ENCODE measurements at regions of chr3 and their contacts with region 1.

Region 1: DNA sequence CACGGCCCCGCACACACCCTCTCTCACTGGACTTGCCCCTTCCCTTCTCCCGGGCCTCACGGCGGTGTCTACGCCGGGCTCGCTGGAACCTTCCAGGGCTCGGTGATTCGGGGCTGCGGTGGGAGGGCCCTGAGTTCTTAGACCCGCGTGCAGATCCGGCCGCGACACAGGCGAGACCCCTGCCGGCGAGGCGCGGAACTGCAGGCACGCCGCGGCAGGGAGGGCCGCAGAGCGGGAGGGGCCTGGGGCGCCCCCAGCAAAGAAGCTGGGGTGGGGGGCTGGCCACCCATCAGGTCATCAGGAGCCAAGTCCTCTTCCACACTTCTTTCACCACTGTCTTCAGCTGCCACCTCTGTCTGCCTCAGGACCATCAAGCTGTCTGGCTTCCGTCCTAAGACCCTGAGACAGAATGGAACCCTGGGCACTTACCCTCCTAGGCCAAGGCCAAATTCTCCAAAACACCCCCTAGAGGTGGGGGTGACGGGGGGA is 164.5 kb downstream of the XXYLT1 start:
- DNase-seq: peak; percentile 73 to 88 (median 75)
- ATAC-seq: peak in 3 of 4 donors; percentile 70 to 79 (median 77)
- H3K4me3 ChIP-seq: peak overlapping the region in 6 of 12 donors; percentile 20 to 42 (median 27)
- H3K27ac ChIP-seq: peak overlapping the region in 1 of 12 donors; percentile 30
- H3K4me1 ChIP-seq: peaks cover 2 to 45% (median 18%) of the 10 kb centered on the region in 12 donors
- H3K27me3 ChIP-seq: no peaks in the 10 kb centered on the region
- CTCF ChIP-seq: peak; percentile 99 to 100 (median 100)
- POLR2A ChIP-seq: no peak

Region 2: GRCh38 chr3:194671900-194672808 is 434.3 kb before region 1 on chr3 and contains the start of gene LSG1:
- intact Hi-C with region 1: loop called in 1 of 10 experiments (anchors 1 kb)
- DNase-seq: peak; percentile 92 to 95 (median 94)
- ATAC-seq: peak; percentile 92 to 97 (median 95)
- H3K4me3 ChIP-seq: peak within 1 kb of the TSS; percentile 67 to 93 (median 82)
- H3K27ac ChIP-seq: peak within 1 kb of the TSS; percentile 90 to 98 (median 94)
- H3K4me1 ChIP-seq: peaks cover 0 to 36% (median 17%) of the 10 kb centered on the region in 12 donors
- H3K27me3 ChIP-seq: no peaks in the 10 kb centered on the region
- CTCF ChIP-seq: peak in 1 of 12 donors; percentile 5
- POLR2A ChIP-seq: peak in 1 of 2 donors; percentile 39
- total RNA-seq, gene LSG1: 13.7 to 22.2 (median 18.9) TPM

Region 3: DNA sequence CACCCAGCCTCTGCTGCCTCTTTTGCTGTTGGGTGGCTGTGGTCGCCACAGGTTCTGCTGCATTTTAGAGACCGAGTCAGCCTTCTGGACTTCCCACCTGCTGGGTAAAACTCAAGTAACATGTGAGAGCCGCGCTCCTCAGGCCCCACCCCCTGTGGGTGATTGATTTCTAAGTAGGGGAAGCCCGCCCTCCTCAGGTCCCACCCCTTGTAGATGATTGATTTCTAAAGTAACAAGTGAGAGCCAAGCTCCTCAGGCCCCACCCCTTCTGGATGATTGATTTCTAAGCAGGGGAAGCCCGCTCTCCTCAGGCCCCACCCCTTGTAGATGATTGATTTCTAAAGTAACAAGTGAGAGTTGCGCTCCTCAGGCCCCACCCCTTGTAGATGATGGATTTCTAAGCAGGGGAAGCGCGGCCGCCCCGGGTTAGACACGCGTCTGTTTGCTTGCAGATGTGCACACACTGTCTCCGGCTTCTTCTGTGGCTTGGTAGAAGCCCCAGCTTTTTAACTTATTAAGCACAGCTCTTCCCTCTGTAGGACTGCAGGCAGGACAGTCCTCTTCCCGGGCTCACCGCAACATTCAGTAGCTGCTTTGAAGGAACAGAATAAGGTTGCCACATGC is 337.3 kb before region 1 on chr3:
- intact Hi-C with region 1: loop called in 1 of 10 experiments (anchors 5 kb)
- DNase-seq: peak; percentile 91 to 97 (median 92)
- ATAC-seq: peak; percentile 98 to 99 (median 99)
- H3K4me3 ChIP-seq: peak overlapping the region in 10 of 12 donors; percentile 26 to 60 (median 45)
- H3K27ac ChIP-seq: peak overlapping the region in 10 of 12 donors; percentile 6 to 66 (median 49)
- H3K4me1 ChIP-seq: peaks cover 0 to 45% (median 18%) of the 10 kb centered on the region in 12 donors
- H3K27me3 ChIP-seq: no peaks in the 10 kb centered on the region
- CTCF ChIP-seq: peak in 1 of 12 donors; percentile 4
- POLR2A ChIP-seq: no peak

Region 4: GRCh38 chr3:194782698-194783404 is 323.6 kb before region 1 on chr3:
- intact Hi-C with region 1: loop called in 1 of 10 experiments (anchors 10 kb)
- DNase-seq: no peak
- ATAC-seq: peak; percentile 34 to 61 (median 55)
- H3K4me3 ChIP-seq: no peak overlapping the region
- H3K27ac ChIP-seq: peak overlapping the region in 7 of 12 donors; percentile 2 to 72 (median 31)
- H3K4me1 ChIP-seq: peaks cover 0 to 37% (median 22%) of the 10 kb centered on the region in 12 donors
- H3K27me3 ChIP-seq: no peaks in the 10 kb centered on the region
- CTCF ChIP-seq: no peak
- POLR2A ChIP-seq: no peak

Region 5: GRCh38 chr3:194871143-194871863 is 235.2 kb before region 1 on chr3:
- intact Hi-C with region 1: loop called in 2 of 10 experiments (anchors 10 kb)
- DNase-seq: peak; percentile 50 to 78 (median 73)
- ATAC-seq: peak; percentile 57 to 76 (median 66)
- H3K4me3 ChIP-seq: no peak overlapping the region
- H3K27ac ChIP-seq: peak overlapping the region in 11 of 12 donors; percentile 44 to 82 (median 70)
- H3K4me1 ChIP-seq: peaks cover 5 to 55% (median 36%) of the 10 kb centered on the region in 12 donors
- H3K27me3 ChIP-seq: no peaks in the 10 kb centered on the region
- CTCF ChIP-seq: no peak
- POLR2A ChIP-seq: no peak

Region 6: DNA sequence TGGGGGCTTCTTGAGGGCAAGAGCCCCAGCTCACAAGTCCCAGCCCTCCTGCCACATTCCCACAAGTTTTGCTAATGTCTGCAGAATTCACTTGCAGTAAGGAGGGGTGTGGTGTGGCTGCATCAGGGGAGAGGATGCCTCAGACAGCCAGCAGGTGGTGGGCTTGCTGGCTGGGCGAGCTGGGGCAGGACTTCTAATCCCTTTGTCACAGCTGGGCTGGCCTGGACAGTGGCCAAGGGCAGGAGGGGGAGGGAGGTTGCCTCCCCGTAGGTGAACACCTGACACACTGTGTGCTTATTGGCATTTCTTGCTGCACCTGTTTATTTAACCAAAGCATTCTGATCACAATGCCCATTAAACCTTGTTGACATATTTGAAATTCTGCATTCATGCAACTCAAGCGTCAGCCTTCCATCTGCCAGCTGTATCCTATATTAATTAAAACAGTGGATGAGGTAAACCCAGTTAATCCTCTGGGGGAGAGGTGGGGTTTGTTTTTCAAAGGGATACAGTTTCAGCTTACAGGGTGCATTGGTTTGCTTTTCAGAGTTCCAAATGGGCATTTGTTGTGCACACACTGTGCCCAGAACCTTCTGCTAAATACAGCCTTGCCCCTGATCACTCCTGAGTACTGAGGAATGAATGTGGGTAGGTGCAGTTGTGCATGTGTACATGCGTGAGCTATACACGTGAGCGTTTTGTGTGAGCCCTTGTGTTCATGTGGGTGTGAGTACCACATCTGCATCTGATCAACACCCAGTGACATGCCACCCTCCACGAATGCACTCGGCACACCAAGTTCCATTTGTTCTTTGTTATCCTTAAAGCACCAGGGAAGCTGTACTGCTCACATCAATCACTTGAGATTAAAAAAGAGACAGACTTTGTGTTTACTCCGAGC is 104.3 kb before region 1 on chr3:
- intact Hi-C with region 1: loop called (anchors 1 to 5 kb)
- DNase-seq: peak; percentile 66 to 83 (median 68)
- ATAC-seq: peak; percentile 71 to 82 (median 72)
- H3K4me3 ChIP-seq: peak overlapping the region in 1 of 12 donors; percentile 7
- H3K27ac ChIP-seq: peak overlapping the region in 10 of 12 donors; percentile 3 to 71 (median 33)
- H3K4me1 ChIP-seq: peaks cover 0 to 28% (median 16%) of the 10 kb centered on the region in 12 donors
- H3K27me3 ChIP-seq: no peaks in the 10 kb centered on the region
- CTCF ChIP-seq: peak; percentile 34 to 74 (median 68)
- POLR2A ChIP-seq: no peak

Region 7: GRCh38 chr3:195048059-195048905 is 58.2 kb before region 1 on chr3:
- intact Hi-C with region 1: no loop called
- DNase-seq: no peak
- ATAC-seq: peak in 3 of 4 donors; percentile 57 to 66 (median 62)
- H3K4me3 ChIP-seq: no peak overlapping the region
- H3K27ac ChIP-seq: no peak overlapping the region
- H3K4me1 ChIP-seq: peaks cover 0 to 8% (median 0%) of the 10 kb centered on the region in 12 donors
- H3K27me3 ChIP-seq: no peaks in the 10 kb centered on the region
- CTCF ChIP-seq: no peak
- POLR2A ChIP-seq: no peak

Region 8: GRCh38 chr3:195172039-195172684 is 65.7 kb after region 1 on chr3:
- intact Hi-C with region 1: no loop called
- DNase-seq: no peak
- ATAC-seq: peak in 1 of 4 donors; percentile 40
- H3K4me3 ChIP-seq: no peak overlapping the region
- H3K27ac ChIP-seq: peak overlapping the region in 3 of 12 donors; percentile 34 to 49 (median 38)
- H3K4me1 ChIP-seq: peaks cover 4 to 43% (median 22%) of the 10 kb centered on the region in 12 donors
- H3K27me3 ChIP-seq: no peaks in the 10 kb centered on the region
- CTCF ChIP-seq: no peak
- POLR2A ChIP-seq: no peak

Region 9: DNA sequence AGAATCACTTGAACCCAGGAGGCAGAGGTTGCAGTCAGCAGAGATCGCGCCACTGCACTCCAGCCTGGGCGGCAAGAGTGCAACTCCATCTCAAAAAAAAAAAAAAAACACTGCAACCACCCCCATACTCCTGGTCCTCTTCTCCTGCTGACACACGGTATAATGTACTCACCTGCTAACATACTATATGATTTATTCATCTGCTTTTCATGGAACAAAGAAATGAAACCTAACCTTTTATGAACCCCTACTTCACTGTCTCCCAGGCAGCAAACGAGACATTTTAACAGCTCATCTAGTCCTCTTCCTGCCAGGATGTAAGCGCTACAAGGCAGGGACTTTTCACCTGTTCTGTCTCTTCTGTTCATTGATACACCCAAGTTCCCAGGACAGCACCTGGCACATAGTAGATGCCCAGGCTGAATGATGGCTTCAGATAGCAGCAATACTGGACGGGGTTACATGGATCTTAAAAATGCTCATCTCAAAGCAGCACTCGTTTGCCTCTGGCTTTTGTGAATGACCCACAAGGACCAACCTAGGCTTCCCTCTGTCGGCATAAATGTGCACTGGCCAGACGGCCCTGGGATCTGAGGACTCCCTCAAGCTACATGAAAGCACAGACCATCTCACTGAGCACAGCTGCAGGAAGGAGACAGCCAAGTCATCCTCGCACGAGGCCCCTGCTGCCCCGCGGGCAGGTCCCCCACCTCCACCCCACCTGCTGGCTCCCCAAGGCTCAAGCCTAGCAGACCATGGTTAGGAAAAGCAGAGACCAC is 144.2 kb after region 1 on chr3:
- intact Hi-C with region 1: loop called in 3 of 10 experiments (anchors 5 to 10 kb)
- DNase-seq: peak in 1 of 5 donors; percentile 61
- ATAC-seq: peak; percentile 30 to 71 (median 66)
- H3K4me3 ChIP-seq: no peak overlapping the region
- H3K27ac ChIP-seq: no peak overlapping the region
- H3K4me1 ChIP-seq: peaks cover 0 to 9% (median 0%) of the 10 kb centered on the region in 12 donors
- H3K27me3 ChIP-seq: no peaks in the 10 kb centered on the region
- CTCF ChIP-seq: peak; percentile 15 to 60 (median 44)
- POLR2A ChIP-seq: no peak

Region 10: DNA sequence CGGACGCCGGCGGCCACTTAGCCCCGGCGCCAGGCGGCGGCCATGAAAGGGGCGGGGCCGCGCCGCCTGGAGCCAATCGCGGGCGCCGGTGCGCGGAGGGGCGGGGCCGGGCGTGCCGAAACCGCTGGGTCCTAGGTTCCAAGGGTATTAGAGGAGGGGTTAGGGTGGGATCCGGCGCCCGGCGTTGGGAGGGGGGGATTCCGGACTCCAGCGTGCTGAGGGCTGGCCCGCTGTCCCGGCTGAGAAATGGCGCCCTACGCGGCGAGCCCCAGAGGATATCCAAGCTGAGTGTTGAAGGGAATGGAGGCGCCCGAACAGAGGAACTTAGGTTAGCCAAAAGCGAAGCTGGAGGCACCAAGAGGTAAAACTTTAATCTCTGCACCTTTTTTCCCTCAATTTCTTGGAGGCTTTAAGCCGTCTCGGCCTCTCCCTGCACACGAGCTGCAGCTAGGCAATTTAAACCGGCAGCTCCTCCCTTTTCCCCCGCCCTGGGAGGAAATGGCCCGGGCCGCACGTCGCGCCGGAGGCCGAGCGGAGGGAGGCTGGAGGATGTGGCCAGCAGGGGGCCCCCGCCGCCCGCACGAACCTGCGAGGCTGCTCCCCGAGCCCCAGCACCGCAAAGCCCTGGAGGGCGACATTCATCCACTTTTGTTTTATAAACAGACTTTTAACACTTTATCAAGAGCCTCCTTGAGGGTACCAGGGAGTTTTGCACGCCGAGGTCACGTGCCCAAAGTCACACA is 164.8 kb after region 1 on chr3 and contains the start of gene XXYLT1:
- intact Hi-C with region 1: no loop called
- DNase-seq: peak; percentile 90 to 95 (median 92)
- ATAC-seq: peak; percentile 92 to 98 (median 95)
- H3K4me3 ChIP-seq: peak within 1 kb of the TSS; percentile 61 to 98 (median 86)
- H3K27ac ChIP-seq: peak within 1 kb of the TSS; percentile 51 to 96 (median 90)
- H3K4me1 ChIP-seq: peaks cover 0 to 28% (median 16%) of the 10 kb centered on the region in 12 donors
- H3K27me3 ChIP-seq: no peaks in the 10 kb centered on the region
- CTCF ChIP-seq: peak; percentile 93 to 99 (median 96)
- POLR2A ChIP-seq: peak in 1 of 2 donors; percentile 52
- total RNA-seq, gene XXYLT1: 2.1 to 8.6 (median 5.5) TPM

Region 11: DNA sequence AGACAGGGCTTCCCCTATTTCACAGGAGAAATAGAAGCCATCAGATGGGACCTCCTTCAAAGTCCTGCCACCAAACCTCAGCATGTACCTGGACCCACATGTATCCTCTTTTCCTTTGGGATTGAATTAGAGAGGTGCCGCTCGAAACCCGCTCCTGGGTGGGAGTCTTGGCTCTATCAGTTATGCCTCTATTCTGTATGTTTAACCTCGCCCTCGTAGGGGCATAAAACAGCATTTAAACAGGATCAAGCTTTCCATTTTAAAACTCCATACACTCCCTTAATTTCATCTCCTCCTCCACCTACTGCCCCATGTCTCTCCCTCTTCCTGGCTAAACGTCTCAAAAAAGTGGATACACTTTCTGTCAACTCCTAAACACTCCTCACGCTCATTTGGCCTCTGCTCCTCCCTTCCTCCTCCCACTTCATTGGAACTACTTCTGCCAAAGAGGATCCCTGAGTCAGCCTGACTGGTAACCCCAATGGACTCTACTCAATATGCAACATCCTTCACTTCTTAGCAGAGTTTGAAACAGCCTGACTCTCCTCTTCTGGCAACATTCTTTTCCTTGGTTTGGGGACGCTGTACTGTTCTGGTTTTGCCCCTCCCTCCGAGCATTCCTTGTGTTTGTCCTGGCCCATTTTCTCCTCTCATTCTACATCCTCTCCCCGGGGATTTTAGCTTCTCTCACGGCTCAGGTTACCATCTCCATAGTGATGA is 591.3 kb after region 1 on chr3:
- intact Hi-C with region 1: no loop called
- DNase-seq: no peak
- ATAC-seq: peak in 3 of 4 donors; percentile 19 to 60 (median 33)
- H3K4me3 ChIP-seq: no peak overlapping the region
- H3K27ac ChIP-seq: peak overlapping the region in 1 of 12 donors; percentile 22
- H3K4me1 ChIP-seq: peaks cover 0 to 13% (median 0%) of the 10 kb centered on the region in 12 donors
- H3K27me3 ChIP-seq: no peaks in the 10 kb centered on the region
- CTCF ChIP-seq: no peak
- POLR2A ChIP-seq: no peak